ENCODE measurements at regions of chr10 and their contacts with region 1.

Region 1: GRCh38 chr10:47458466-47459154 is 25.3 kb downstream of the ANXA8 start:
- DNase-seq: no peak
- H3K4me3 ChIP-seq: no peak overlapping the region
- H3K27ac ChIP-seq: no peak overlapping the region
- H3K4me1 ChIP-seq: no peaks in the 10 kb centered on the region
- H3K27me3 ChIP-seq: no peaks in the 10 kb centered on the region
- CTCF ChIP-seq: no peak
- EP300 ChIP-seq: no peak
- POLR2A ChIP-seq: no peak

Region 2: GRCh38 chr10:47402641-47403301 is 55.8 kb before region 1 on chr10:
- intact Hi-C with region 1: loop called (anchors 5 kb)
- DNase-seq: peak; percentile 91
- H3K4me3 ChIP-seq: no peak overlapping the region
- H3K27ac ChIP-seq: no peak overlapping the region
- H3K4me1 ChIP-seq: peaks cover 14 to 28% (median 23%) of the 10 kb centered on the region in 4 donors
- H3K27me3 ChIP-seq: no peaks in the 10 kb centered on the region
- CTCF ChIP-seq: no peak
- EP300 ChIP-seq: no peak
- POLR2A ChIP-seq: no peak

Region 3: DNA sequence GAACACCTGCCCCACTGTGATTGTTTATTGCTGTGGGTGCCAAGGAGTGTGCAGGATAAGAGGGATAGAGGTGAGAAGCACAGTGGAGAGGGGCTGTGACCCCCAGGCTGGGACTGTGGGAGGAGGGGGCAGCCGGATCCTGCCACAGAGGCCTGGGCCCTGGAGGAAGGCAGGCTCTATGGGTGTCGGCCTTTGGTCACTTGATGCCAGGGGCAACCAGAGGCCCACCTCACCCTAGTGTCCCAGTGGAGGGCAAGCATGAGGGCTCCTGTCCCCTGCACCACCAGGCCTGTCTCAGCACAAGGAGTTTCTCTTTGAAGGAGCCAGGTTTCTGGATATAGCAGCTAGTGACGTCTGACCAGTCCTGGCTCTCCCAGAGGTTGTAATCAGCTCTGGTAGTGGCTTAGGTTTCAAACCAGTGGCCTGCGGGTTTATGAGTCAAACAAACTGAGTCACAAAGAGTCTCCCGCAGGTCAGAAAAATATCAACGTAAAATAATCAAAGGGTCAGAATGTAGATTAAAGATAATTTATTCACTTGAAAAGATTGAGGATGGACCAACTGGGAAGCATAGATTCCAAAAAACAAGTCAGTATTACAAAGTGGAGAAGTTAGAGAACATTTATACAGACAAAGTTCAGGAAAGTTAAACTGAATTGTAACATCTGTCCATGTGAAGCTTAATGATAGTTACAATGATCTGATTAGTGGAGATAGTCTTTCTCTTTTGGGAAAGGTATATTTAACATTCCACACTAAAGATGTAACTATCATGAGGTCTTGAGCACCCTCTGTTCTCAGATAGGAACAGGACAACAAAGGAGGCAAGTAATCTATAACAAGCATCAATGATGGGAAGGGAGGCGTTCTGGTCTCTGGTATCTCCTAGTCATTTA is 37.3 kb before region 1 on chr10:
- intact Hi-C with region 1: no loop called
- DNase-seq: peak; percentile 62
- H3K4me3 ChIP-seq: no peak overlapping the region
- H3K27ac ChIP-seq: no peak overlapping the region
- H3K4me1 ChIP-seq: no peaks in the 10 kb centered on the region
- H3K27me3 ChIP-seq: peaks cover 0 to 8% (median 0%) of the 10 kb centered on the region in 4 donors
- CTCF ChIP-seq: no peak
- EP300 ChIP-seq: no peak
- POLR2A ChIP-seq: no peak